ENCODE measurements at regions of chr22 and their contacts with region 1.

Region 1: GRCh38 chr22:17830043-17830961 is 56.0 kb upstream of the BID start:
- DNase-seq: peak; percentile 19
- H3K4me3 ChIP-seq: no peak overlapping the region
- CTCF ChIP-seq: peak; percentile 99

Region 2: DNA sequence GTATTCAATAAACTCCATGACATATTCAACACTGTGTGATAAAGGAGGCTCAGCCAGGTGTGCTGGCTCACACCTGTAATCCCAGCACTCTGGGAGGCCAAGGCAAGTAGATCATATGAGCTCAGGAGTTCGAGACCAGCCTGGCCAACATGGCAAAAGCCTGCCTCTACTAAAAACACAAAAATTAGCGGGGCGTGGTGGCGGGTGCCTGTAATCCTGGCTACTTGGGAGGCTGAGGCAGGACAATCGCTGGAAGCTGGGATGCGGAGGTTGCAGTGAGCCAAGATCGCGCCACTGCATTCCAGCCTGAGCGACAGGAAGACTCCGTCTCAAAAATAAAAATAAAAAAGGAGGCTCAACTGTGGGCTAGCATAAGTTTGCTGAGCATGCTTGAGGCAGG is 271.1 kb before region 1 on chr22:
- CTCF ChIA-PET with region 1: interaction called, 27 read pairs
- POLR2A ChIA-PET with region 1: no interaction called
- DNase-seq: no peak
- H3K4me3 ChIP-seq: no peak overlapping the region
- CTCF ChIP-seq: no peak

Region 3: DNA sequence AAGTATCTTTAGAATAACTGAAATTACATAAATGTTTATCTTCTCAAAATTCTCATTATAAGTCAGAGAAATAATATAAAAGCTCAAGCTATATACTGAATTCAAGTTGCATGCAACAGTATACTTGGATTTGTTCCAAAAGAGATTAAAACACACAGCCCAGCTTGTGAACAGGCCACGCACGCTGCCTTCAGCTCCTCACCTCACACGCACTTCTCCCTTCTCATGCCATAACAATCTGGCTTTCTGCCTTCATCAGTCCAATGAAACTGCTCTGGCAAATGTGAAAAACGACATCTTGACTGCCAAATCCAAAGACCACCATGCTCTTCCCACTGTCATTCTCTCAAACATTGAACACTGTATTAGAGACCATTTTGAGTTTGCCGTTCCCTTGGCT is 223.8 kb before region 1 on chr22:
- CTCF ChIA-PET with region 1: no interaction called
- POLR2A ChIA-PET with region 1: no interaction called
- DNase-seq: peak; percentile 36
- H3K4me3 ChIP-seq: no peak overlapping the region
- CTCF ChIP-seq: no peak

Region 4: DNA sequence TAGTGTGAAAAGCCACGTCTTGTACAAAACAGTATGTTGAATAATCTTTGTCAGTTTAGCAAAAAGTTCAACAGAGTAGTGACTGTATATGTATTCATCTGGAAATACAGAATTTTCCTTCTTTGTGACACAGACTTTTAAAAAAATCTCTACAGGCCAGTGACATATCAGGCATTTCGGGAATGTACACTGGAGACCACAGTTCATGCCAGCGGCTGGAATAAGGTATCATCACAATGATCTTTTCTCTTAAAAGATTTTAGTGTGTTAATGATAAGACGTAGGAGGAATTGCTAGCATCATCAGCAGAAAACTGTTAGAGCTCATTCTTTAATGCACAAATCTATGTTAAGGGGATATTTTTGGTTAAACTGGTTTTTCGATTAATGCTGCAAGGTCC is 134.3 kb before region 1 on chr22:
- CTCF ChIA-PET with region 1: no interaction called
- POLR2A ChIA-PET with region 1: no interaction called
- DNase-seq: no peak
- H3K4me3 ChIP-seq: no peak overlapping the region
- CTCF ChIP-seq: no peak

Region 5: GRCh38 chr22:17724678-17725499 is 105.4 kb before region 1 on chr22:
- CTCF ChIA-PET with region 1: no interaction called
- POLR2A ChIA-PET with region 1: no interaction called
- DNase-seq: no peak
- H3K4me3 ChIP-seq: no peak overlapping the region
- CTCF ChIP-seq: no peak

Region 6: DNA sequence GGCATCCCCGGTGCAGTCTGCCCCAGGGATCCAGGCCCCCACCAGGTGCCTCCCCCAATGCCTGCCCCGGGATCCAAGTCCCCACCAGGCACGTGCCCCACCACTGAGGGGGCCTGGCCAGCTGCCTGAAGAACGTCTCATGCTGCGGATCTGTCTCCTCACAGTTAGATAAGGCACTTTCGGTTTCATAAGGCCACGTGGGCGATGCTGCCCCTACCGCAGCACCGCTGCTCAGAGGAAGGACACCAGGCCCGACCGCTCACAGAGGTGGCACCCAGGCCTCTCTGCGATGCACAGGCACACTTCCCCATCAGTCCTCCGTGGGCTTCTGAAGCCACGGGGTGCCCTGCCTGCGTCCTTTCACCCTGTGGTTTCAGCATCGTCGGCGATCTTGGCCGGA is 12.1 kb after region 1 on chr22:
- CTCF ChIA-PET with region 1: interaction called, 49 read pairs
- POLR2A ChIA-PET with region 1: no interaction called
- DNase-seq: no peak
- H3K4me3 ChIP-seq: no peak overlapping the region
- CTCF ChIP-seq: no peak

Region 7: DNA sequence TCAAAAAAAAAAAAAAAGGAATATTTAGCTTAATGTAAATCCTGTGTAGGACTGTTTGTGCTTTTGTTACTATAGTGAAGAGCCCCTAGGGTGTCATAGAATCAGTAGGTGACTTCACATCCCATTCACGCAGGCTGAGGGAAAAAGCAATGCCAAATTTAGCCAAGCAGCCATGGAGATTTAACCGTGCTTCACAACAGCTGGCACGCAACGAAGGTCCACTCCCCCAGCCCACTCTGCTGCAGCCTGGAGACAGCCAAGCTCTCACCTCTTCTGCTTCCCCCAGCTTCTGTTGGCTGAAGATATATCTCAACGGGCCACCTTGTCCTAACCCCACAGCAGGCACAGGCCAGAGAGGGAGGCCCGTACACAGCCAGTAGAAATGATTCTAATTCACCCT is 22.8 kb after region 1 on chr22:
- CTCF ChIA-PET with region 1: interaction called, 11 read pairs
- POLR2A ChIA-PET with region 1: no interaction called
- DNase-seq: no peak
- H3K4me3 ChIP-seq: no peak overlapping the region
- CTCF ChIP-seq: no peak

Region 8: GRCh38 chr22:18024276-18024947 is 194.1 kb after region 1 on chr22 and contains the start of gene MICAL3:
- CTCF ChIA-PET with region 1: interaction called, 33 read pairs
- POLR2A ChIA-PET with region 1: interaction called, 3 read pairs
- DNase-seq: no peak
- H3K4me3 ChIP-seq: peak within 1 kb of the TSS; percentile 68
- CTCF ChIP-seq: peak; percentile 74

Region 9: DNA sequence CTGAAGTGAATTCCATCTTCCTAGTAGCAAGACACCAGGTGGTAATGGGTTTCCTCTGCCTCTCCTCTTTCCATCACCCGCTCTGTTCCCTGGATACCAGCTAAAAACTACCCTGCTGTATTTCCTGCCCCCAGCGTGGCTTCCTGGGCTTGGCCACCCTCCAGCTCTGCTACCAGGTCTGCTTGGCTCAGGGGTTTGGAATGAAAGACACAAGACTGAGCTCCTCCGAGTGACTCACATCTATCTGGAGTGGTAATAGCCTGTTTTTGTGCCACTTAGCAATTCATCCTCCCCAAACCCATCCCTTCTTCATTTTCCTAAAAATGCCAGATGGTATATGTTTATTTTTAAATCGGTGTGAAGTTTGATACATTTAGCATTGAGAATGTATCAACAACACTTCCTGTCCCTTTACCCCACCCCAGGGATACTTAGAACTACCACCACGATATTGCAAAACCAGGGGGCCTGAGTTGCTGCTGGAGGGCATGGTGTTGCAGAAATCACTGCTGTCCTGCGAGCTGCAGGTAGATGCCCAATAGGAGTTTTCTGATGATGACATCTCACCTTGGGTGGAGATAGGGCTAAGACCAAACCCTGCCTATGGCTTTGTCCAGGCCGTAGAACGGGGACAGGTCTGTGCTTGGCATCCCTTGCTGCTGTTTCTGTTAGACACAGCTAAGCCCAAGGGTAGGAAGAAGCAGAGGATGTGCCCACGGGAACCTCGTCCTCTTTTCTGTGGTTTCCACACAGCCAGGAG is 201.6 kb after region 1 on chr22:
- CTCF ChIA-PET with region 1: interaction called, 10 read pairs
- POLR2A ChIA-PET with region 1: interaction called, 3 read pairs
- DNase-seq: peak; percentile 92
- H3K4me3 ChIP-seq: no peak overlapping the region
- CTCF ChIP-seq: no peak